ENCODE measurements at regions of chr16 and their contacts with region 1.

Region 1: GRCh38 chr16:11768849-11769248 is 26.2 kb upstream of the TXNDC11 start:
- DNase-seq: no peak
- ATAC-seq: no peak
- H3K4me3 Mint-ChIP-seq: no peak overlapping the region
- H3K27ac Mint-ChIP-seq: peak overlapping the region; percentile 23
- H3K4me1 Mint-ChIP-seq: peaks cover 13% of the 10 kb centered on the region
- H3K27me3 Mint-ChIP-seq: no peaks in the 10 kb centered on the region

Region 2: DNA sequence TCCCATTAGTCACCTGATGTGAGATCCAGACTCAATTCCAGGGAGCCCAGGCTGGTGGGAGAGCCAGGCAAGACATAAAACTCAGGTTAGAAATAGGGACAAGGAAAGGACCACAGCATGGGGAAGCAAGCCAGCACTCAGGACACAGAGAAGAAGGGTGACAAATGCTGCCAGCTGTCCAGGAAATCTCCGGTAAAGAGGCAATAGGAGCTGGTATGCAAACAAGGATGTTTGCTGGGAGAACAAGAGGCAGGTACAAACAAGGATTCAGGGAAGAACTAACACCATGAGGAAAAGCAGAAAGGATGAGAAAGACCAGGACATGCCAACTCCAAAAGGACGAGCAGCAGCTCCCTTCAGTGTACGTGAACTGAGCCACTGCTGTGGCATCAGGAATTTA is 16.0 kb before region 1 on chr16:
- CTCF ChIA-PET with region 1: no interaction called
- POLR2A ChIA-PET with region 1: no interaction called
- intact Hi-C with region 1: loop called in 1 of 2 experiments (anchors 2 kb)
- DNase-seq: no peak
- ATAC-seq: no peak
- H3K4me3 Mint-ChIP-seq: no peak overlapping the region
- H3K27ac Mint-ChIP-seq: no peak overlapping the region
- H3K4me1 Mint-ChIP-seq: no peaks in the 10 kb centered on the region
- H3K27me3 Mint-ChIP-seq: no peaks in the 10 kb centered on the region

Region 3: DNA sequence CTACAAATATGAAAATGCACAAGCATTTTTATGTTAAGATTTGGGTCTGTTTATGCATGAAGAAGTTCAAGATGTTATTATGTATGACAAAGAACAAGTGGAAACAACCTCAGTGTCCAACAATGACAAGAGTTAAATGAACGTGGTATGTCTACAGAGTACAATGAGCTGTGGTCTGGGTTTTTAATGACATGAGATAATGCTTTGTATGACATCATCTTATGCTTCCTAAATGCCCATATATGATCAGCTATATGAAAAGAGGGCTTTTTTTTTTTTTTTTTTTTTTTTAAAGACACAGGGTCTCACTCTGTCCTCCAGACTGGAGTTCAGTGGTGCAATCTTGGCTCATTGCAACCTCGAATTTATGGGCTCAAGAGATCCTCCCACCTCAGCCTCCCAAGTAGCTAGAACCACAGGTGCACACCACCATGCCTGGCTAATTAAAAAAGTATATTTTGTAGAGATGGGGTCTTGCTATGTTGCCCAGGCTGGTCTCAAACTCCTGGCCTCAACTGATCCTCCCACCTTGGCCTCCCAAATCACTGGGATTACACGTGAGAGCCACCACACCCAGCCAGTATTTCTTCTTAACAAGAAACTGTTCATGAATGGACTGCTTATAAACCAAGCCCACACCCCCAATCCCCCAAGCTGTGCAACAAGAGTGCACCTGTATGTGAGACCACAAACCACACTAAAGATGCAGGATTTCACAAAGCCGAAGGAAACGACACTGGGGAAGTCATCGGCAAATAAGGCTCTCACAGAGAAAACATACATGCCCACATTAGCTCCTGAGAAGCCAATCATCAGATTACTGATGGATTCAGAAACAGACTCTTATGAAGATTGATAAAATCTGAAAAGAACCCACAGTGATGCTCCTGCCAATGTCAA is 920.4 kb after region 1 on chr16:
- CTCF ChIA-PET with region 1: no interaction called
- POLR2A ChIA-PET with region 1: no interaction called
- intact Hi-C with region 1: no loop called
- DNase-seq: no peak
- ATAC-seq: peak; percentile 58
- H3K4me3 Mint-ChIP-seq: no peak overlapping the region
- H3K27ac Mint-ChIP-seq: no peak overlapping the region
- H3K4me1 Mint-ChIP-seq: peaks cover 10% of the 10 kb centered on the region
- H3K27me3 Mint-ChIP-seq: no peaks in the 10 kb centered on the region

Measured in activated CD4-positive, alpha-beta T cell treated with anti-CD3 and anti-CD28 coated beads for 36 hours (primary cell).